ENCODE measurements at regions of chr4 and their contacts with region 1.

Region 1: GRCh38 chr4:64713256-64713840 is 304.1 kb upstream of the TECRL start:
- DNase-seq: no peak
- H3K4me3 ChIP-seq: no peak overlapping the region
- H3K27ac ChIP-seq: no peak overlapping the region
- H3K4me1 ChIP-seq: peaks cover 0 to 3% (median 0%) of the 10 kb centered on the region in 4 experiments; a peak in 1 of 7 replicates
- H3K27me3 ChIP-seq: no peaks in the 10 kb centered on the region
- CTCF ChIP-seq: peak in 2 of 3 experiments; percentile 24 to 58; a peak in 2 of 4 replicates
- EP300 ChIP-seq: no peak
- POLR2A ChIP-seq: no peak
- RAD21 ChIP-seq: peak; percentile 56 to 57

Region 2: DNA sequence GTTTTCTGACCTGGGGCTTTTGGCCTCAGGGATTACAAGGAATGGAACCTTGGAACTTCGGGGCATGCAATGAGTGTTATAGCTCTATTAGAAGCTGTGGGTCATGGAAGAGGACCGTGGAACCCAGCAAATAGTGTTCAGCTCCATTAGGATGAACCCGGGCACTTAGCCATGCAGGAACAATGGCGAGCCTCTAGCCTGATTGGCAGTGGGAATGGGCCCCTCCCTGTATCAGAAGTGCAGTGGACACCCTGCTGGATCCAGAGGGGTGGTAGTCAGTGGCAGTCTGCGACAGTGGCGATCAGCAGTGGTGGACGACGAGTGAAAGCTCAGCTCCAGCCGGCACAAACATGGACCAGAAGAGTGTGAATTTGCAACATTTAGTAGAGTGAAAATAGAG is 11.3 kb after region 1 on chr4:
- CTCF ChIA-PET with region 1: interaction called, 15 read pairs
- POLR2A ChIA-PET with region 1: interaction called, 9 read pairs
- DNase-seq: no peak
- H3K4me3 ChIP-seq: no peak overlapping the region
- H3K27ac ChIP-seq: no peak overlapping the region
- H3K4me1 ChIP-seq: peaks cover 2 to 9% (median 3%) of the 10 kb centered on the region in 4 experiments; a peak in 5 of 7 replicates
- H3K27me3 ChIP-seq: no peaks in the 10 kb centered on the region
- CTCF ChIP-seq: no peak
- EP300 ChIP-seq: no peak
- POLR2A ChIP-seq: no peak
- RAD21 ChIP-seq: no peak

Region 3: DNA sequence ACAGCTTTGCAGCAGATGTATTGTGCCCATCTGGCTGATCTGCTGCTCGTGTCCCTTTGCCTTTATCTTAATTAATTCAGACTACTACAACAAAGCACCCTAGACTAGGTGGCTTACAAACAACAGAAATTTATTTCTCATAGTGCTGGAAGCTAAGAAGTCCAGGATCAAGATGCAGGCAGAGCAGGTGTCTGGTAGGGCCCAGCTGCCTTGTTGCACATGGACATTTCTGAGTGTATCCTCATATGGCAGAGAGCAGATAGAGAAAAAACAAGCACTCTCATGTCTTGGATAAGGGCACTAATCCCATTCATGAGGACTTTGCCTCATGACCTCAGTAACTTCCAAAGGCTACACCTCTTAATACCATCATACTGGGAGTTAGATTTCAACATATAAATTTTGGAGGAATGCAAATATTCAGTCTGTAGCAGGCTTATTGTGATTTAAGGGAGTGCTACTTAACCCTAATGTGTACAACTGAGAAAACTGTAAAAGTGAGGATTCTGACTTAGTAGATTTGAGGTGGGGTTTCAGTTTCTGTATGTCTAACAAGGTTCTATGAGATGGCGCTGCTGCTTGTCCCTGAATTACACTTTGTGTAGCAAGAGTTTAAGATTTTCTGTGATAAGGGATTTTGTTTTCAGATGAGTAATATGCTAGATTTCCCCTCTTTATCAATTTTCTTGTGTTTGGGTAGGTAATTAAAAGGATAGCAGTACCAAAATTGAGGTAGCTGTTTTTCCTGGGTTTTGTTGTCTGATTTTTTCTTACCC is 169.2 kb after region 1 on chr4:
- CTCF ChIA-PET with region 1: no interaction called
- POLR2A ChIA-PET with region 1: no interaction called
- DNase-seq: no peak
- H3K4me3 ChIP-seq: no peak overlapping the region
- H3K27ac ChIP-seq: no peak overlapping the region
- H3K4me1 ChIP-seq: no peaks in the 10 kb centered on the region
- H3K27me3 ChIP-seq: no peaks in the 10 kb centered on the region
- CTCF ChIP-seq: no peak
- EP300 ChIP-seq: no peak
- POLR2A ChIP-seq: no peak
- RAD21 ChIP-seq: no peak

Region 4: DNA sequence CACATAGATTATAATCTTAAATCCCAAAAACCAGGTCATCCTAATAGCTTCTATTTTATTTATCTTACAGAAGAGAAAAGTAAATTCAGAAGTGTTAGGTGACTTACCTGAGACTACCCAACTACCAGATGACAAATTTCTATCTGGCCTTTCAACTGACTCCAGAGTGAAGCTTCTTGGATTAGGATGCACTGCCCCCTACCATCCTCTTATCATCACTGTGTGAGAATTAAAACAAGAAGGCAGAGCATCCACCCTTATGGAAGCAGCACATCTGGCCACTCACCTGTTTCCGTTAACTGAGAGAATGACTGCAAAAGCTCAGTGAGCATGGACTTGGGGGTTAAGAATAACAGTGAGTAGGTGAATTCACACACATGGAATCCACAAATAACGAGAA is 198.5 kb after region 1 on chr4:
- CTCF ChIA-PET with region 1: interaction called, 22 read pairs
- POLR2A ChIA-PET with region 1: no interaction called
- DNase-seq: peak in 1 of 2 experiments; percentile 13
- H3K4me3 ChIP-seq: no peak overlapping the region
- H3K27ac ChIP-seq: no peak overlapping the region
- H3K4me1 ChIP-seq: no peaks in the 10 kb centered on the region
- H3K27me3 ChIP-seq: no peaks in the 10 kb centered on the region
- CTCF ChIP-seq: peak in 2 of 3 experiments; percentile 62 to 66; a peak in 3 of 4 replicates
- EP300 ChIP-seq: no peak
- POLR2A ChIP-seq: no peak
- RAD21 ChIP-seq: peak; percentile 87 to 90

Region 5: GRCh38 chr4:65023883-65024670 is 310.7 kb after region 1 on chr4:
- CTCF ChIA-PET with region 1: no interaction called
- POLR2A ChIA-PET with region 1: no interaction called
- DNase-seq: no peak
- H3K4me3 ChIP-seq: no peak overlapping the region
- H3K27ac ChIP-seq: no peak overlapping the region
- H3K4me1 ChIP-seq: peaks cover 0 to 3% (median 0%) of the 10 kb centered on the region in 4 experiments; a peak in 1 of 7 replicates
- H3K27me3 ChIP-seq: no peaks in the 10 kb centered on the region
- CTCF ChIP-seq: no peak
- EP300 ChIP-seq: no peak
- POLR2A ChIP-seq: no peak
- RAD21 ChIP-seq: no peak